Activated CD4-positive, alpha-beta memory T cell treated with anti-CD3 and anti-CD28 coated beads for 36 hours (primary cell): ENCODE measurements at regions of chr15 and their contacts with region 1.

Region 1: DNA sequence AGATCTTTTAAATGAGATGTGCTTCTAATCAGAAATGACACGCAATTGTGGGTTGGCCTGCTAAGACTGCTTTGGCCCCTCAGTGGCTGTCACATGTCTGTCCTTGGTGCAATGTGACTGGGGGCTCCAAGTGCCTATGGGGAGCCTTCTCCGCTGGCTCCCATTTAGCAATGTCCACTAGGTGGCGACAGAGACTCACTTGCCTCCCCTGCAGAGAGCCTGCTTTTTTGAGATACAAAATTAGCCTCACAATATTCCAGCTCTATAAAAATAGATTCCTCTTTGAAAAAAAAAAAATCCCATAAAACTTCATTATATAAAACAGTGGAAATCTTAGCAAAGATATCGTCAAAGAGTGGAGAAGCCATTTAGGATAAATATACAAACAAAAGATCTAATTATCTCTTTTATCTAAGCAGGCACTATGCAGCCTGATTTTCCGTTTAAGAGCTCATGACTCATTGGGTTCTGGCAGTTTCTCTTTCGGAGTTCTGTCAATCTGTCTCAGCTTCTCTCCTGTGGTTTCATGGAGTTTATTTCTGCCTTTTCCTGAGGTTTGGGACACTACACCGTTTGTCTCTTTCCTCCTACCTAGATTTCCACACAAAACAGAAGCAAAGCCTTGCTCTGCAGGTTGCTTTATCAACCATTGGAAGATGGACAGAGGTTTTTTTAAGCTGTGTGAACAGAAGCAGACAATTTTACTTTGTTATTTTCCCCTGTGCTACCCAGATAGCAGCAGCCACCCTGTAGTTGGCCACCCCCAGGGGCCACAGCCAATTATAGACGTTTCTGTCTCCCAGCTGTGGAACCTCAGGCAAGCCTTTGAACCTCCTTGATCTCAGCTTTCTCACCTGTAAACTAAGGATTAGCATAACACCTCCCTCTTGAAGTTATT is 68.4 kb upstream of the TNFAIP8L3 start:
- DNase-seq: peak; percentile 70
- H3K4me3 Mint-ChIP-seq: no peak overlapping the region
- H3K27ac Mint-ChIP-seq: no peak overlapping the region
- H3K4me1 Mint-ChIP-seq: no peaks in the 10 kb centered on the region
- H3K27me3 Mint-ChIP-seq: peaks cover 9% of the 10 kb centered on the region

Region 2: GRCh38 chr15:51144021-51144532 is 19.0 kb before region 1 on chr15:
- CTCF ChIA-PET with region 1: interaction called, 25 read pairs
- POLR2A ChIA-PET with region 1: no interaction called
- intact Hi-C with region 1: no loop called
- DNase-seq: no peak
- H3K4me3 Mint-ChIP-seq: no peak overlapping the region
- H3K27ac Mint-ChIP-seq: no peak overlapping the region
- H3K4me1 Mint-ChIP-seq: no peaks in the 10 kb centered on the region
- H3K27me3 Mint-ChIP-seq: peaks cover 8% of the 10 kb centered on the region

Region 3: GRCh38 chr15:51192521-51193280 is 29.6 kb after region 1 on chr15:
- CTCF ChIA-PET with region 1: interaction called, 89 read pairs
- POLR2A ChIA-PET with region 1: interaction called, 4 read pairs
- intact Hi-C with region 1: loop called (anchors 1 kb)
- DNase-seq: peak; percentile 85
- H3K4me3 Mint-ChIP-seq: no peak overlapping the region
- H3K27ac Mint-ChIP-seq: no peak overlapping the region
- H3K4me1 Mint-ChIP-seq: peaks cover 4% of the 10 kb centered on the region
- H3K27me3 Mint-ChIP-seq: peaks cover 22% of the 10 kb centered on the region

Region 4: DNA sequence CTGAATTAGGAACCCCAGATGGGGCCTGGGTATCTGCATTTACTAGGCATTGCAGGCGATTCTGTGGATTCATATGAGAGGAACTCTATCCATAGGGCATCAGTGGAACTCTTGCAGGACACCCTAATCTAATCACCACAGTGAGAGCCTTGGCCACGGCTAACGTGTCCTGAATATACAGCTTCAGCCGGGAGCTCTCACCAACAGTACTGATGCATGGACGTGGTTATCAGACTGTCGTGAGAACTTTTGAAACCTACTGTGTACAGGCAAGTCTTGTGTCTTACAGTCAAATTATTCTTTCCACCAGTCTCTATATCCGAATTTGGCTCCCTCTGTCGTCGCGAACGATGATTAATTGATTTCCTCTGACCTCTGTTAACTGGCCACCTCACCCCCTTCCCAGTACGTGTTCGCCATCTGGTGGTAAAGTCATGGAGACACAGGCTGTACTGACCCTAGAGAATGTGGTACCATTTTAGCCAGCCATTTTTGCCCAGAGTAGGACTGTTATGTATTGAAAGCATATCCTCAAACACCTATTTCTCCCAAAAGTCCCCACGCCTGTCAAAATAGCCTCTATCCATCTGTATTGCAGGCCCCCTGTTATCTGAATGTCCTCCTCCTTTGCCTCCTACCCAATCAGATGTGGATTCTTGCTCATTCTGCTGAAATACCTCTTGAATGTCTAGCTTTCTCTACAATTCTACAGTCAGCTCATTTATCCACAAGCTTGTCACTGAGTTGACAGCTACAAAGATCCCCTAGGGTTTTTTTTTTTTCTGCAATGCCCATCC is 218.1 kb after region 1 on chr15:
- CTCF ChIA-PET with region 1: interaction called, 44 read pairs
- POLR2A ChIA-PET with region 1: no interaction called
- intact Hi-C with region 1: loop called (anchors 1 kb)
- DNase-seq: peak; percentile 46
- H3K4me3 Mint-ChIP-seq: no peak overlapping the region
- H3K27ac Mint-ChIP-seq: no peak overlapping the region
- H3K4me1 Mint-ChIP-seq: no peaks in the 10 kb centered on the region
- H3K27me3 Mint-ChIP-seq: peaks cover 22% of the 10 kb centered on the region

Region 5: GRCh38 chr15:51499379-51499976 is 336.4 kb after region 1 on chr15:
- CTCF ChIA-PET with region 1: interaction called, 15 read pairs
- POLR2A ChIA-PET with region 1: no interaction called
- intact Hi-C with region 1: loop called (anchors 2 kb)
- DNase-seq: no peak
- H3K4me3 Mint-ChIP-seq: no peak overlapping the region
- H3K27ac Mint-ChIP-seq: no peak overlapping the region
- H3K4me1 Mint-ChIP-seq: no peaks in the 10 kb centered on the region
- H3K27me3 Mint-ChIP-seq: no peaks in the 10 kb centered on the region